Gastrocnemius medialis (tissue), 4 donors: ENCODE measurements at regions of chr12 and their contacts with region 1.

Region 1: GRCh38 chr12:33383503-33383902 is 56.1 kb downstream of the SYT10 start:
- DNase-seq: no peak
- ATAC-seq: no peak
- H3K4me3 ChIP-seq: no peak overlapping the region
- H3K27ac ChIP-seq: no peak overlapping the region
- H3K4me1 ChIP-seq: no peaks in the 10 kb centered on the region
- H3K27me3 ChIP-seq: no peaks in the 10 kb centered on the region
- CTCF ChIP-seq: no peak
- POLR2A ChIP-seq: no peak

Region 2: DNA sequence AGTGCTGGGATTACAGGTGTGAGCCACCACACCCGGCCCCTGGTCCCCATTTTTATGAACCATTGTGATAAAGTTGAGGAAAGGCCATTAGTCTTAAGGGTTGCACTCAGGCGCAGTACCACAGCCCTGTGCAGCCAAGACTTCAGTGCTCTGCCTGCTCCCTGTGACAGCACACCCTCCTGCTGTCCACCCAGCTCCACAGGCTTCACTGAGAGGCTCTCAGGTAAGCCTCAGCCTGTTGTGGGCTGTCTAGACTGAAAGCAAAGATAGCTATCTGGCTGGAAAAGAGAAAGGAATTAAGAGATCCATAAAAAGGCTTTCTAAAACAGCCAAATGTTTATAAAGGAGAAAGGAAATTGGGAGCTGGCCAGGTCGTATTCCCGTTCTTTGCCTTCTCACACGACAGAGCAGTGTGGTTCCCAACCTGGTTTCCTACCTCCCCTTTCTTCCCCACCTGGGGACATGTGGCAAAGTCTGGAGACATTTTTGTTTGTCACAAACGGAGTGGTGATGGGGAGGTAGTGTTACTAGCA is 723.5 kb before region 1 on chr12:
- in situ Hi-C with region 1: no loop called
- intact Hi-C with region 1: no loop called
- DNase-seq: no peak
- ATAC-seq: peak in 1 of 2 donors; percentile 7
- H3K4me3 ChIP-seq: peak overlapping the region in 1 of 4 donors; percentile 9
- H3K27ac ChIP-seq: peak overlapping the region; percentile 81 to 93 (median 87)
- H3K4me1 ChIP-seq: peaks cover 19 to 23% of the 10 kb centered on the region in 2 donors
- H3K27me3 ChIP-seq: no peaks in the 10 kb centered on the region
- CTCF ChIP-seq: no peak
- POLR2A ChIP-seq: no peak

Region 3: DNA sequence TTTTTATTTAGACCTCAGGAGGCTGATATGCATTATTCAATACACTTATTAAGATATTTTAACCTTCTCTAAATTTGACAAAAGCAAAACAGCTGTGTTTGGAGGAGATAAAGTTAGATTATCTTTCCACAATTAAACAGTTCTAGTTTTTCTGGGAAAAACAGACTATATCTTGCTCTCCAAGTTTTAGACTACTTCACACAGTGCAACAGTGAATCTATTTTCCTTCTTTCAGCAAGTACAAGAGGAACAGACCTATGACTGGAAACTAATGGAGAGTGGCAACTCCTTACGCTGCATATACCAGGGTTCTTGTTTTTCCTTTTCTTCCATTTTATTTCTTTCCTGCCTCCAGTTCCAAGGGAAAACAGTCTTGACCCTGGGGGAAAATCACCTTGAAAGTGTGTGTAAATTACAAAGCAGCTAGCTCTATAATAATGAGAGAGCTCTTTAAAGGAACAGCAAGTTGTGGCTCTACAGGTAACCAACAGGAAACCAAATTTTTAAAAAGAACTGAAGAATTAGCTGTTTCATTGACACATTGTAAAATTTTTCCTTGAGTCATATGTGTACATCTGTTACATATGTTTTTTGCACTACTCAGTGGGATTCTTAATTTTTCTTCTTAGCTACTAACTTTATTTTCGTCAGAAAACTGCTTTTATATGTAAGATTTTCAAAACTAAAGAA is 677.0 kb before region 1 on chr12:
- in situ Hi-C with region 1: no loop called
- intact Hi-C with region 1: no loop called
- DNase-seq: no peak
- ATAC-seq: no peak
- H3K4me3 ChIP-seq: no peak overlapping the region
- H3K27ac ChIP-seq: no peak overlapping the region
- H3K4me1 ChIP-seq: no peaks in the 10 kb centered on the region
- H3K27me3 ChIP-seq: no peaks in the 10 kb centered on the region
- CTCF ChIP-seq: no peak
- POLR2A ChIP-seq: no peak

Region 4: GRCh38 chr12:33296529-33296928 is 87.0 kb before region 1 on chr12:
- in situ Hi-C with region 1: loop called in 1 of 4 experiments (anchors 25 kb)
- intact Hi-C with region 1: no loop called
- DNase-seq: no peak
- ATAC-seq: no peak
- H3K4me3 ChIP-seq: no peak overlapping the region
- H3K27ac ChIP-seq: no peak overlapping the region
- H3K4me1 ChIP-seq: no peaks in the 10 kb centered on the region
- H3K27me3 ChIP-seq: no peaks in the 10 kb centered on the region
- CTCF ChIP-seq: no peak
- POLR2A ChIP-seq: no peak